Mammary epithelial cell (primary cell): ENCODE measurements at regions of chr16 and their contacts with region 1.

Region 1: GRCh38 chr16:381789-382717 is at the start of gene PGAP6:
- DNase-seq: no peak
- H3K4me3 ChIP-seq: peak within 1 kb of the TSS; percentile 77 to 85 (median 78)
- H3K27ac ChIP-seq: peak within 1 kb of the TSS; percentile 24
- H3K4me1 ChIP-seq: peaks cover 22% of the 10 kb centered on the region
- H3K27me3 ChIP-seq: no peaks in the 10 kb centered on the region
- CTCF ChIP-seq: no peak
- total RNA-seq, gene PGAP6: 31.3 to 44.5 TPM

Region 2: GRCh38 chr16:77807-78443 is 304.1 kb before region 1 on chr16 and contains the start of gene MPG:
- CTCF ChIA-PET with region 1: no interaction called
- dilution Hi-C with region 1: no loop called
- in situ Hi-C with region 1: no loop called
- intact Hi-C with region 1: no loop called
- DNase-seq: peak; percentile 51
- H3K4me3 ChIP-seq: peak within 1 kb of the TSS; percentile 61 to 83 (median 71)
- H3K27ac ChIP-seq: peak within 1 kb of the TSS; percentile 61
- H3K4me1 ChIP-seq: peaks cover 32% of the 10 kb centered on the region
- H3K27me3 ChIP-seq: no peaks in the 10 kb centered on the region
- CTCF ChIP-seq: no peak
- total RNA-seq, gene MPG: 50.7 to 70.5 TPM

Region 3: DNA sequence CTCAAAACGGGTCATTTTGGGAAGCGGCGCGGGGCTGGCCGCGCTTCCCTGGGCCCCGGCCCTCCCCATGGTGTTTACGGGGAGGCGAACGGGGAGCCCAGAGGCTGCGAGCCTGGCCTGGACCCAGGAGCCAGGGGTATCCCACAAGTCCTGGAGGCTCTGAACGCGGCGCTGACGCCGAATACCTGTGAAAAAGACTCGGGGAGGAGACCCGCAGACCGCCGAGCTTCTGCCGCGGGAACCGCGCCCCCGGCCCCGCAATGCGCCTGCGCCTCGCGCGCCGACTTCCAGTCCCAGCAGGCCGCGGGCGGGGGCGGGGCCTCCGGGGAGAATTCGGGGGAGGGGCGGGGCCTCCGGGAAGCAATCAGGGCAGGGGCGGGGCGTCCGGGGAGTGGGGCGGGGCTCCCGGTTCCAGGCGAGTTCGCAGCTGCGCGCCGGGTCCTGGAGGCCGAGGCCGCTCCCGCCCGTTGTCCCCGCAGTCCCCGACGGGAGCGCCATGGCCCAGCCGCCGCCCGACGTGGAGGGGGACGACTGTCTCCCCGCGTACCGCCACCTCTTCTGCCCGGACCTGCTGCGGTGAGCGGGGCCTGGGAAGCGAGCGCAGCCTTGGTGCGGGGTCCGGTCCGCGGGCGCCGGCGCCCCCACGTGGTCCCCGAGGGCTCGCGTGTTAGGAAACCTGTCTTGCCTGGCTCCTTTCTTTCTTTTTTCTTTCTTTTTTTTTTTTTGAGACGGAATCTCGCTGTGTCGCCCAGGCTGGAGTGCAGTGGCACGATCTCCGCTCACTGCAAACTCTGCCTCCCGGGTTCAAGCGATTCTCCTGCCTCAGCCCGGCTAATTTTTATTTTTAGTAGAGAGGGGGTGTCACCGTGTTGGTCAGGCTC is 19.7 kb after region 1 on chr16 and contains the start of gene DECR2:
- CTCF ChIA-PET with region 1: no interaction called
- dilution Hi-C with region 1: no loop called
- in situ Hi-C with region 1: no loop called
- intact Hi-C with region 1: loop called (anchors 2 kb)
- DNase-seq: peak; percentile 79
- H3K4me3 ChIP-seq: peak within 1 kb of the TSS; percentile 77 to 88 (median 80)
- H3K27ac ChIP-seq: peak within 1 kb of the TSS; percentile 38
- H3K4me1 ChIP-seq: peaks cover 6% of the 10 kb centered on the region
- H3K27me3 ChIP-seq: no peaks in the 10 kb centered on the region
- CTCF ChIP-seq: peak; percentile 7 to 58
- total RNA-seq, gene DECR2: 19.2 to 26.6 TPM

Region 4: DNA sequence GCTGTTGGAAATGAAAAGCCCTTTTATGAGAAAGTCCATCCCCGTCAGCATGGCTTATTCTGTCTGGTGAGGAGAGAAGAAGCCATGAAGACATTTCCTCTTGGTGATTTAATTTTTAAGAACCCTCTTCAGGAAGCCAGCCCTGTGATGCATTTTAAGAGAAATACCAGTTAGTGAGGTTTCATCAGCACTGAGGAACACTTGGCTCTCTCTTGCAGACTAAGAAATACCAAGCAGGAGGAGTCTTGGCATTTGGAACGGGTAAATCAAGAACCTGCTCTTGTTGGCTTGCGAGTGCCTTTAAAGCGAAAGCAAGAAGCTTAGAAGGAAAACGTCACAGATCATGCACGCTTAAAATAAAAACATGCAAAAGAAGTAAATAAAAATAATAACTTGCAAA is 60.9 kb after region 1 on chr16:
- CTCF ChIA-PET with region 1: no interaction called
- dilution Hi-C with region 1: no loop called
- in situ Hi-C with region 1: no loop called
- intact Hi-C with region 1: no loop called
- DNase-seq: no peak
- H3K4me3 ChIP-seq: no peak overlapping the region
- H3K27ac ChIP-seq: no peak overlapping the region
- H3K4me1 ChIP-seq: peaks cover 6% of the 10 kb centered on the region
- H3K27me3 ChIP-seq: no peaks in the 10 kb centered on the region
- CTCF ChIP-seq: no peak

Region 5: GRCh38 chr16:527006-527753 is 145.1 kb after region 1 on chr16 and contains the start of gene CAPN15:
- CTCF ChIA-PET with region 1: no interaction called
- dilution Hi-C with region 1: no loop called
- in situ Hi-C with region 1: no loop called
- intact Hi-C with region 1: loop called (anchors 5 kb)
- DNase-seq: peak; percentile 86
- H3K4me3 ChIP-seq: peak within 1 kb of the TSS; percentile 70 to 88 (median 83)
- H3K27ac ChIP-seq: peak within 1 kb of the TSS; percentile 80
- H3K4me1 ChIP-seq: peaks cover 38% of the 10 kb centered on the region
- H3K27me3 ChIP-seq: no peaks in the 10 kb centered on the region
- CTCF ChIP-seq: peak in 1 of 2 donors; percentile 32
- total RNA-seq, gene CAPN15: 32.8 to 58.5 TPM

Region 6: GRCh38 chr16:578870-579405 is 196.9 kb after region 1 on chr16:
- CTCF ChIA-PET with region 1: interaction called, 31 read pairs
- dilution Hi-C with region 1: no loop called
- in situ Hi-C with region 1: no loop called
- intact Hi-C with region 1: loop called (anchors 10 kb)
- DNase-seq: no peak
- H3K4me3 ChIP-seq: no peak overlapping the region
- H3K27ac ChIP-seq: no peak overlapping the region
- H3K4me1 ChIP-seq: no peaks in the 10 kb centered on the region
- H3K27me3 ChIP-seq: no peaks in the 10 kb centered on the region
- CTCF ChIP-seq: peak; percentile 38 to 65

Region 7: DNA sequence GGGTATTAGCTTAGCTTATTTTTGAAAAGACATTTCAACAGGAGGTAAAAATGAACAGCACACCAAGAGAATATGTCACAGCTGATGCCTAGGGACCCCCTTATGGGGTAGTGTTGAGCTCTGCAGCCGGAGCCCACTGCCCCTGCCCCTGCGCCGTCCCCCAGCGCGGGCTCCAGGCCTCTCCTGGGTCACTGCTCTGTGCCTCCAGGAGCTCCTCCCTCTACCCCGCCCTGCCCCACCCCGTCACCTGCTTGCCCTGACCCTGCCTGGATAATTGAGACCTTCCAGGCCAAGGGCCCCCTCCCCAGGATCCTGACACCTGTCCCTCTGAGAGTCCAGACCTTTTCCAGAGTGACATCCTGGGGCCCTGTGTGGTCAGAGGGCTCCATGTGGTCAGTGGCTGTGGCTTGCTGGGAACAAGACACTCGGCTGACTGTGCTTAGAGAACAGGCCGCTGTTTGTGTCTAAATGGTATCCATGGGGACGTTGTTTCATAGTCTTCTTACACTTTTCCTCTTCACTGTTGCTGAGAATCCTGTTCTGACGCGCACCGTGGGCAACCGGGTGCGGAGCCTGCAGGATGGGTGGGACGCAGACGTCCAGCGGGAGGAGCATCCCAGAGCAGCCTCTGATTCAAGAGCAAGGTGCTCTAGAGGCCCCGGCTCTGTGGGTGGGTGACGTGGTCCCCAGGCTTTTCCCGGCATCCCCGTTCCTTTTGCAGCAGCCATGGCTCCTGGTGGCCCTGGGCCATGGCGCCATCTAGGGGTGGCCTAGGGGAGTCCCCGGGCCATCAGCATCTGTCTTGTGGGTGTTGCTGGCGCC is 228.7 kb after region 1 on chr16:
- CTCF ChIA-PET with region 1: no interaction called
- dilution Hi-C with region 1: no loop called
- in situ Hi-C with region 1: no loop called
- intact Hi-C with region 1: loop called (anchors 2 kb)
- DNase-seq: peak; percentile 83
- H3K4me3 ChIP-seq: no peak overlapping the region
- H3K27ac ChIP-seq: peak overlapping the region; percentile 33
- H3K4me1 ChIP-seq: peaks cover 12% of the 10 kb centered on the region
- H3K27me3 ChIP-seq: no peaks in the 10 kb centered on the region
- CTCF ChIP-seq: peak; percentile 84 to 97

Region 8: GRCh38 chr16:708019-708418 is 326.0 kb after region 1 on chr16:
- CTCF ChIA-PET with region 1: interaction called, 20 read pairs
- dilution Hi-C with region 1: no loop called
- in situ Hi-C with region 1: no loop called
- intact Hi-C with region 1: no loop called
- DNase-seq: no peak
- H3K4me3 ChIP-seq: no peak overlapping the region
- H3K27ac ChIP-seq: no peak overlapping the region
- H3K4me1 ChIP-seq: peaks cover 9% of the 10 kb centered on the region
- H3K27me3 ChIP-seq: peaks cover 26% of the 10 kb centered on the region
- CTCF ChIP-seq: no peak